ENCODE measurements at regions of chr16 and their contacts with region 1.

Region 1: DNA sequence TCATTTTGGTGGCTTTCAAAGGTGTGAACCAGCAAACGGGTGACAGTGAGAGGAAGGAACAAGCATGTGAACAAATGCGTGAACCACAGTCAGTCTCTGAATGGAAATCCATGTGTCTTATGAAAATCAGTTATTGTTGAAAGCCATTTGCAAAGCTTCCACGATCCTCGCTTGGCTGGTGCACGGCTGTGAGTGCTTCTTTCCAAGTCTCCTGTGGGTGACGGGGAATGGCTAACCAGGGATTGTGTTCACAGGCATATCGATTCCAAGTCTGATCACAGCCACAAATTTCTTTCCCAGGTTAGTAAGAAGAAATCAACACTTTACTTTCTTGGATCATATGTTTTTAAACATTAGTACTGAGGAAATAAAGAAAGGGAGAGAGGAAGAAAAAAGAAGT is 556.9 kb upstream of the RBFOX1 start:
- DNase-seq: no peak
- ATAC-seq: no peak
- H3K4me3 ChIP-seq: no peak overlapping the region
- H3K27ac ChIP-seq: no peak overlapping the region
- H3K4me1 ChIP-seq: no peaks in the 10 kb centered on the region
- H3K27me3 ChIP-seq: no peaks in the 10 kb centered on the region

Region 2: DNA sequence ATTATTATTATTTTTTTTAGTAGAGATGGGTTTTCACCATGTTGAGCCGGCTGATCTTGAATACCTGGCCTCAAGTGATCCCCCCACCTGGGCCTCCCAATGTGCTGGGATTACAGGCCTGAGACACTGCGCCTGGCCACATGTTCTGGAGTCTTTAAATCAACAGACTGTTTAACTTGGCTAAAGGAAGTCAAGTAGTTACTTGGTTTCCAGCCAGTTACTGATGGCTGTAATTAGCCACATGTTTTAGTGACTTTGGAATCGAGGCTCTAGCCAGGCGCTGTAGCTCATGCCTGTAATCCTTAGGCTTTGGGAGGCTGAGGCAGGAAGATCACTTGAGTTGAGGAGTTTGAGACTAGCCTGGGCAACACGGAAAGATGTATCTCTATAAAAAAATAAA is 142.3 kb before region 1 on chr16:
- intact Hi-C with region 1: no loop called
- DNase-seq: no peak
- ATAC-seq: no peak
- H3K4me3 ChIP-seq: no peak overlapping the region
- H3K27ac ChIP-seq: no peak overlapping the region
- H3K4me1 ChIP-seq: no peaks in the 10 kb centered on the region
- H3K27me3 ChIP-seq: no peaks in the 10 kb centered on the region

Region 3: DNA sequence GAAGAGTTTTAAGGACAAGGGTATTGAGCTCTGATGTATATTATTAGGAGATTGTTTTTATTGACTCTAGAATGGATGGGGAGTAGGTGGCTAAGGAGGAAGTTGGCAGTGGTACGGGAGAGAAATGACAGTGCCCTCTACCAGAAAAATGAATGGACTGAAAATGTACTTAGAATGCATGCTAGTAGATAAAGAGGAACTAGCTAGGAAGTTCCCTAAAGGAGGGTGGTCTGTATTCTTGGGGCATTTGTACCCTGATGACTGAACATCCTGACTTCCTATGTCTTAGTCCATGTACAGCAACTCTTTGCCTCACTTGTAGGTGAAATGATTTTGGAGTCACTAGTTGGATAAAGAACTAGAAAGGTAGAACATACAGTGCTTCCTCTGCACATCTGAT is 24.5 kb before region 1 on chr16:
- intact Hi-C with region 1: loop called in 1 of 2 experiments (anchors 2 kb)
- DNase-seq: no peak
- ATAC-seq: no peak
- H3K4me3 ChIP-seq: no peak overlapping the region
- H3K27ac ChIP-seq: no peak overlapping the region
- H3K4me1 ChIP-seq: no peaks in the 10 kb centered on the region
- H3K27me3 ChIP-seq: no peaks in the 10 kb centered on the region